Uterus (tissue), 4 donors: ENCODE measurements at regions of chr12 and their contacts with region 1.

Region 1: GRCh38 chr12:69585189-69586062 is at the start of gene CCT2:
- DNase-seq: peak; percentile 96
- H3K4me3 ChIP-seq: peak within 1 kb of the TSS; percentile 83 to 98
- H3K27ac ChIP-seq: peak within 1 kb of the TSS; percentile 78 to 84
- H3K4me1 ChIP-seq: no peaks in the 10 kb centered on the region
- H3K27me3 ChIP-seq: no peaks in the 10 kb centered on the region
- CTCF ChIP-seq: peak in 2 of 4 experiments; percentile 10 to 28
- POLR2A ChIP-seq: peak; percentile 53 to 86
- total RNA-seq, gene CCT2: 59.1 to 200 (median 152) TPM

Region 2: GRCh38 chr12:69470189-69471075 is 115.0 kb before region 1 on chr12 and contains the start of gene FRS2:
- intact Hi-C with region 1: loop called (anchors 10 kb)
- DNase-seq: peak; percentile 89 to 92
- H3K4me3 ChIP-seq: peak within 1 kb of the TSS; percentile 75 to 83
- H3K27ac ChIP-seq: peak within 1 kb of the TSS; percentile 90 to 91
- H3K4me1 ChIP-seq: peaks cover 0 to 13% of the 10 kb centered on the region in 2 donors
- H3K27me3 ChIP-seq: no peaks in the 10 kb centered on the region
- CTCF ChIP-seq: peak in 2 of 4 experiments; percentile 14 to 19
- POLR2A ChIP-seq: peak; percentile 64 to 84
- total RNA-seq, gene FRS2: 27.4 to 159 (median 65.4) TPM